Right ventricle myocardium inferior (tissue), 1 donor: ENCODE measurements at regions of chr17 and their contacts with region 1.

Region 1: GRCh38 chr17:27494192-27495091 is 38.2 kb downstream of the KSR1 start:
- DNase-seq: peak; percentile 82
- ATAC-seq: peak; percentile 88

Region 2: GRCh38 chr17:27569257-27569722 is 74.8 kb after region 1 on chr17:
- intact Hi-C with region 1: loop called (anchors 5 kb)
- DNase-seq: no peak
- ATAC-seq: no peak